IMR-90 (cell line): ENCODE measurements at regions of chr13 and their contacts with region 1.

Region 1: GRCh38 chr13:106337096-106337850 is 198.2 kb downstream of the EFNB2 start:
- DNase-seq: peak; percentile 75
- ATAC-seq: peak; percentile 93
- H3K4me3 ChIP-seq: no peak overlapping the region
- H3K27ac ChIP-seq: no peak overlapping the region
- H3K4me1 ChIP-seq: peaks cover 2% of the 10 kb centered on the region; the same call in 1 of the 2 replicates
- H3K27me3 ChIP-seq: no peaks in the 10 kb centered on the region
- CTCF ChIP-seq: no peak
- POLR2A ChIP-seq: no peak
- RAD21 ChIP-seq: no peak

Region 2: DNA sequence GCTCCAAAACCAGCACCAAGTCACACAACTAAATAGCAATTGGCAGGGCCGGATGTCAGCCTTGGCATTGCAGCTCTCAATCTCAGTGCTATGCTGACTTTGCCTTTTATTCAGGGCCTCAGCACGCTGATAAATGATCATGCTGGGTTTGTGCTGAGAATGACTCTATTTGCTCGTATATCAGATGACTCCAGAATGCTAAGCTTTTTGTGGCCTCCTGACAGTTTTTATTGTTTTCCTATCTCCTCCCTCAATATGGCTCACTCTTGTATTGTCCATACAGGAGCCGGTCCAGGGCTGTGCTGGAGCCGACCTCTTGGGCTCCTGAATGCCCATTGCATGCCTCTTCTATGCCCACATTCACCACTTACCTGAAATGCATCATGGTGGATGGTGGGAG is 12.8 kb before region 1 on chr13:
- CTCF ChIA-PET with region 1: interaction called, 3 read pairs
- POLR2A ChIA-PET with region 1: no interaction called
- dilution Hi-C with region 1: no loop called
- in situ Hi-C with region 1: no loop called
- intact Hi-C with region 1: loop called (anchors 1 kb)
- DNase-seq: no peak
- ATAC-seq: no peak
- H3K4me3 ChIP-seq: no peak overlapping the region
- H3K27ac ChIP-seq: no peak overlapping the region
- H3K4me1 ChIP-seq: no peaks in the 10 kb centered on the region
- H3K27me3 ChIP-seq: no peaks in the 10 kb centered on the region
- CTCF ChIP-seq: no peak
- POLR2A ChIP-seq: no peak
- RAD21 ChIP-seq: no peak

Region 3: GRCh38 chr13:106520205-106521054 is 183.2 kb after region 1 on chr13:
- CTCF ChIA-PET with region 1: no interaction called
- POLR2A ChIA-PET with region 1: no interaction called
- dilution Hi-C with region 1: no loop called
- in situ Hi-C with region 1: no loop called
- intact Hi-C with region 1: no loop called
- DNase-seq: peak; percentile 56
- ATAC-seq: peak; percentile 75
- H3K4me3 ChIP-seq: no peak overlapping the region
- H3K27ac ChIP-seq: peak overlapping the region; percentile 22; the same call in 1 of the 2 replicates
- H3K4me1 ChIP-seq: peaks cover 6% of the 10 kb centered on the region
- H3K27me3 ChIP-seq: no peaks in the 10 kb centered on the region
- CTCF ChIP-seq: peak; percentile 73
- POLR2A ChIP-seq: no peak
- RAD21 ChIP-seq: peak; percentile 72